Kidney (tissue), 22 donors: ENCODE measurements at regions of chr15 and their contacts with region 1.

Region 1: DNA sequence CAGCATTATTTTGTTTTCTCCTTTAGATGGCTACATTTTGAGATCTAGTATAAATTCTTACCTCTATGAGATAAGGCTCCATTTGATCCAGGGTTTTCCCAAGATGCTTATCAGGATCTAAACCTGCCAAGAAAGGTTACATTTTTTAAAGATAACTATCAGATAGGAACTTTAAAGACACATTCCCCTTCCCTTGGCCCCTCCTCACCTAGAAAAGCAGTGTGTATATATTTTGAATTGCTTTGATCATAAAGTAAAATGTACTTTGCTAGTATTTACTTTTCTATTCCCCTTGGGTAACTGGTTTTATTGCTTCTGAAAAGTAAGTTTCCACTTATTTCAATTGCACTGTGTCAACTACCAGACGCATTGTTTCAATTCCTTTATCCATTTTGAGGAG is 135.2 kb downstream of the DPH6 start:
- DNase-seq: no peak
- H3K4me3 ChIP-seq: no peak overlapping the region
- H3K27ac ChIP-seq: no peak overlapping the region
- H3K4me1 ChIP-seq: no peaks in the 10 kb centered on the region
- H3K27me3 ChIP-seq: no peaks in the 10 kb centered on the region
- CTCF ChIP-seq: no peak

Region 2: GRCh38 chr15:35362195-35362829 is 48.5 kb before region 1 on chr15:
- intact Hi-C with region 1: loop called (anchors 10 kb)
- DNase-seq: no peak
- H3K4me3 ChIP-seq: no peak overlapping the region
- H3K27ac ChIP-seq: no peak overlapping the region
- H3K4me1 ChIP-seq: no peaks in the 10 kb centered on the region
- H3K27me3 ChIP-seq: no peaks in the 10 kb centered on the region
- CTCF ChIP-seq: no peak